ENCODE measurements at regions of chr6 and their contacts with region 1.

Region 1: GRCh38 chr6:26003102-26003694 is 40.6 kb downstream of the TRIM38 start:
- DNase-seq: peak; percentile 60

Region 2: DNA sequence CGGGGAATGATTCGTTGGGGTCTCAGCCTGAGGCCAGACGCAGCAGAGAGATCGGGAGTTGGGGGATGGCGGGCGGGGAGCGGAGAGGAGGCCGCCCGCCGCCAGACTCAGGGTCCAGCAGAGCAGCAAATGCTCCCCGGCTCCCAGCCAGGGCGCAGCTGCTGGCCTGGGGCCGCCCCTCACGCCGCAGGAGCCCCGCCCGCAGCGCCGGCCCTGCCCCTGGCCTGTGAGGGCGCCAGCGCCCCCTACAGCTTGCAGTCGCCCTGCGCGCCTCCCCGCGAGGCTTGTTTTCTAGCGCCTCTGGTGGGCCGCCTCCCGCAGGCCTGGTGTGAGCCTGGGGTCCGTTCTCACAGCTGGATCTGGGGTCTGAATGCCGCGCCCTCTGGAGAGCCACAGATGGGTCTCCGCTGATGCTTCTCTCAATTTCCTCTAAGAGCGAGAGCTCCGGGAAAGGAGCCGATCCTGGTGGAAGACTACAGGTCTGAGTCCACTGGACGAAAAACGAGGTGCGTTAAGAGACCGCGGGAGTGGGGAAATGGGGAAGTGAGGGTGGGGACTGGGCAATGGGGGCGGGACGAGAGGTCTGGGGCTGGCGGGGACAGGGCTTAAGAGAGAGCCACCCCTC is 10.7 kb before region 1 on chr6:
- CTCF ChIA-PET with region 1: interaction called, 25 read pairs
- POLR2A ChIA-PET with region 1: interaction called, 9 read pairs
- DNase-seq: peak; percentile 88

Region 3: DNA sequence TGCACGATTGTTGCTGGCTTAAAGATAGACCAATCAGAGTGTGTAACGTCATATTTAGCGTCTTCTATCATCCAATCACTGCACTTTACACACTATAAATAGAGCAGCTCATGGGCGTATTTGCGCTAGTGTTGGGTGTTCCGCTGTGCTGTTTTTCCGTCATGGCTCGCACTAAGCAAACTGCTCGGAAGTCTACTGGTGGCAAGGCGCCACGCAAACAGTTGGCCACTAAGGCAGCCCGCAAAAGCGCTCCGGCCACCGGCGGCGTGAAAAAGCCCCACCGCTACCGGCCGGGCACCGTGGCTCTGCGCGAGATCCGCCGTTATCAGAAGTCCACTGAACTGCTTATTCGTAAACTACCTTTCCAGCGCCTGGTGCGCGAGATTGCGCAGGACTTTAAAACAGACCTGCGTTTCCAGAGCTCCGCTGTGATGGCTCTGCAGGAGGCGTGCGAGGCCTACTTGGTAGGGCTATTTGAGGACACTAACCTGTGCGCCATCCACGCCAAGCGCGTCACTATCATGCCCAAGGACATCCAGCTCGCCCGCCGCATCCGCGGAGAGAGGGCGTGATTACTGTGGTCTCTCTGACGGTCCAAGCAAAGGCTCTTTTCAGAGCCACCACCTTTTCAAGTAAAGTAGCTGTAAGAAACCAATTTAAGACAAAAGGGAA is 17.3 kb after region 1 on chr6:
- CTCF ChIA-PET with region 1: interaction called, 3 read pairs
- POLR2A ChIA-PET with region 1: interaction called, 19 read pairs
- DNase-seq: peak; percentile 78